PC-9 (cell line): ENCODE measurements at regions of chr7 and their contacts with region 1.

Region 1: DNA sequence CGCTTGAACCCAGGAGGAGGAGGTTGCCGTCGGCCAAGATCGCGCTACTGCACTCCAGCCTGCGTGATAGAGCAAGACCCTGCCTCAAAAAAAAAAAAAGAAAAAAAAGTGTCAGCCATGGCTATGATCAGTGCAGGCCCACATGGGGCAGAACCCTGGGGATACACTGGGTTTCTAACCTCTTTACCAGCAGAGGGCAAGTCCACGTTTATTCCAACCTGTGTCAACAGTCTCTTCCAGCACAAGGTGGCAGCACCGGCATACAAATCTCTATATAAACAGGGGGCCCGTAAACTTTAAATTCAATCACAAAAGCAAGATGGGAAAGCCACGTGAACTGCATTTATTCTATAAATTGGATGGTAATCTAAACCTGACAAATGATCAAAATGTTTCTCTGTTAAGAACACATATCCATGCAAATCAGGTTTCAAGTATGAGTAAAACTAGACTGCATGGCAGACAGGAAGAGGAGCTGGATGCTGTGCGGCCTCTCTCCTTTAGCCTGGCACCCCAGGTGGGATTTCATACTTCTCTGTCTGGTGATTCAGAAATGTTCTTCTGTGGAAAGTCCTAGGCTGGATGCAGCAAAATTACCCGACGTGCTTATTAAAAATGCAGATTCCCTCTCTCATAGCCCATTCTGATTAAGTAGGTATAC is 60.0 kb upstream of the STEAP1B start:
- DNase-seq: peak; percentile 78 to 79
- H3K4me3 ChIP-seq: no peak overlapping the region
- H3K27ac ChIP-seq: peak overlapping the region; percentile 84
- H3K4me1 ChIP-seq: peaks cover 50% of the 10 kb centered on the region
- H3K27me3 ChIP-seq: no peaks in the 10 kb centered on the region
- CTCF ChIP-seq: peak; percentile 99

Region 2: DNA sequence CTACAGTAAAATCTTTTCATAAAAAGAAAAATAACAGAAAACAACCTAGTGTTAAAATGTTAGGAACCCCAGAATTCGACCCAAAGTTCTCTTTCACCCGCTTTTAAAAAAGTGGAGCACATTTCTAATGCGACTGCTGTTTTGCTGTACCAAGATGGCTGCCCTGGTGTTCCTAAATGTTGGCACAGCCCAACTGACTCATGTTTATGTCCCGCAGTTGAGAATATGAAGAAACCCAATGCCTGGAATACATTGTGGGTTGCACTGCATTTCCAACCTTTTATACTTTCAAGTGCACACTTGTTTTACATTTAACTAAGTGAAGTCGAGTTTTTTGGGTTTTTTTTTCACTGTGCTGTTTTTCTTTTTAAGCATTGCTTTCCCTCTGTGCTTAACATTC is 60.9 kb before region 1 on chr7:
- CTCF ChIA-PET with region 1: no interaction called
- POLR2A ChIA-PET with region 1: no interaction called
- intact Hi-C with region 1: no loop called
- DNase-seq: no peak
- H3K4me3 ChIP-seq: no peak overlapping the region
- H3K27ac ChIP-seq: no peak overlapping the region
- H3K4me1 ChIP-seq: peaks cover 23% of the 10 kb centered on the region
- H3K27me3 ChIP-seq: no peaks in the 10 kb centered on the region
- CTCF ChIP-seq: no peak

Region 3: GRCh38 chr7:22549667-22550513 is 10.1 kb before region 1 on chr7:
- CTCF ChIA-PET with region 1: no interaction called
- POLR2A ChIA-PET with region 1: interaction called, 13 read pairs
- intact Hi-C with region 1: no loop called
- DNase-seq: peak in 1 of 2 experiments; percentile 79
- H3K4me3 ChIP-seq: no peak overlapping the region
- H3K27ac ChIP-seq: no peak overlapping the region
- H3K4me1 ChIP-seq: no peaks in the 10 kb centered on the region
- H3K27me3 ChIP-seq: no peaks in the 10 kb centered on the region
- CTCF ChIP-seq: peak; percentile 65

Region 4: DNA sequence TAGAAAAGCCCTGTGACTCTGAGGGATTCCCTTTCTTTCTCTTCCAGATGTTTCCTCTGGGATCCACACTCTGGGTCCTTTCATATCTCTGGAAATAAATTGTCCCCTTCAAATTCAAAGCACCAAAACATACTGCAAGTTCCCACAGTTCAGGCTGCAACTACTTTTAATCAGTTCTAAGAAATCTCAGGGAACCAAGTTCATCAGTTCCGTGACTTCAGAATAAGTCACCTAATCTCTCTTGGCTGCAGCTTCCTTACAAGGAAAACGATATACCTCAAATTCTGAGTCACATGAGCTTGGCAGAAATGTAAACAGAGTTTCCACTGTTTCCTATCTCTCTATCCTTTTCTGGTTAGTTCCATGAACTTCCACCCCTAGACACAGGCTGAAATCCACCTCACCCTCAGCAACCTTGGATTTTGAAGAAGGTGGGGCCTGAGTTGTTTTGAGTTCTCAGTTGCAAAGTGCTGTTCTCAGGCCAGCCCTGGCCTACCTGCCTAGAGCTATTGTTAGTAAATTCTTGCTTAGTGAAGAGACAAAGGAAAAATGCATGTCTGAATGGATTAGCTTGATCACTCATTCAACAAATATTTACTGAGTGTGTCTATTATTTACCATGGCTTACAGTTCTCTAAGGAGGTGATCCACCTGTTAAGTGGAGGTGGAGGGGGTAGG is 107.7 kb after region 1 on chr7:
- CTCF ChIA-PET with region 1: interaction called, 5 read pairs
- POLR2A ChIA-PET with region 1: interaction called, 7 read pairs
- intact Hi-C with region 1: loop called (anchors 1 kb)
- DNase-seq: peak; percentile 87 to 100
- H3K4me3 ChIP-seq: no peak overlapping the region; the same call in 1 of the 2 replicates
- H3K27ac ChIP-seq: peak overlapping the region; percentile 94
- H3K4me1 ChIP-seq: peaks cover 71% of the 10 kb centered on the region
- H3K27me3 ChIP-seq: no peaks in the 10 kb centered on the region
- CTCF ChIP-seq: no peak

Region 5: GRCh38 chr7:22732556-22733126 is 172.7 kb after region 1 on chr7:
- CTCF ChIA-PET with region 1: interaction called, 113 read pairs
- POLR2A ChIA-PET with region 1: interaction called, 24 read pairs
- intact Hi-C with region 1: loop called (anchors 1 kb)
- DNase-seq: peak; percentile 33 to 70
- H3K4me3 ChIP-seq: no peak overlapping the region
- H3K27ac ChIP-seq: no peak overlapping the region
- H3K4me1 ChIP-seq: peaks cover 35% of the 10 kb centered on the region
- H3K27me3 ChIP-seq: no peaks in the 10 kb centered on the region
- CTCF ChIP-seq: peak; percentile 86

Region 6: DNA sequence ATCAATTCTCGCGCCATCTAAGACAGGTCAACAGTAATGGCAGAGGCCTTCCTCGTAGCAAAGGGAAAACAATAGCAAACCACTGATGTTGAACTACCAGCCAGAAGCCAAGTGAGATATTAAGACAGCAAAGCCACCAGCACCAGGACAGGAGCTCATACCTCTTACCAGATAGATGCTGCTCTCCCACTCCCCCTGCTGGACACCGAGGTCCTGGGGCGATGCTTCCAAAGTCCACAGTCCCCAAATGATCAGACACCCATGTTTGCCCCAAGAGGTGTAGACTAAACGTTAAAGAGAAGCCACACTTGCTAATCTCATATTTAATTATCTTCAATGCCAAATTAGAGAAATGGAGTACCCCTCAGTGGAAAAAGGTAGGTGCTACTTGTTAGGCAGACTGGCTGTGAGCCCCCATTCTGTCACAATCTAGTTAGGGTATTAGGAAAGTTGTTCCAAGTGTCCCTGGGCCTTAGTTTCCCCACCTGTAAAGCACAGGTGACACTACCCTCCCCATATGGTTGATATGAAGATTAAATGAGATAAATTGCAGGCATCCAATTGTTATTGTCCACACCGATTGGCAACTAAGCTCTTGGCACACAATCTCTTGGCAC is 222.8 kb after region 1 on chr7:
- CTCF ChIA-PET with region 1: interaction called, 16 read pairs
- POLR2A ChIA-PET with region 1: interaction called, 11 read pairs
- intact Hi-C with region 1: loop called (anchors 1 kb)
- DNase-seq: peak; percentile 54 to 70
- H3K4me3 ChIP-seq: no peak overlapping the region
- H3K27ac ChIP-seq: no peak overlapping the region
- H3K4me1 ChIP-seq: no peaks in the 10 kb centered on the region; the same call in 1 of the 2 replicates
- H3K27me3 ChIP-seq: no peaks in the 10 kb centered on the region
- CTCF ChIP-seq: peak; percentile 95

Region 7: DNA sequence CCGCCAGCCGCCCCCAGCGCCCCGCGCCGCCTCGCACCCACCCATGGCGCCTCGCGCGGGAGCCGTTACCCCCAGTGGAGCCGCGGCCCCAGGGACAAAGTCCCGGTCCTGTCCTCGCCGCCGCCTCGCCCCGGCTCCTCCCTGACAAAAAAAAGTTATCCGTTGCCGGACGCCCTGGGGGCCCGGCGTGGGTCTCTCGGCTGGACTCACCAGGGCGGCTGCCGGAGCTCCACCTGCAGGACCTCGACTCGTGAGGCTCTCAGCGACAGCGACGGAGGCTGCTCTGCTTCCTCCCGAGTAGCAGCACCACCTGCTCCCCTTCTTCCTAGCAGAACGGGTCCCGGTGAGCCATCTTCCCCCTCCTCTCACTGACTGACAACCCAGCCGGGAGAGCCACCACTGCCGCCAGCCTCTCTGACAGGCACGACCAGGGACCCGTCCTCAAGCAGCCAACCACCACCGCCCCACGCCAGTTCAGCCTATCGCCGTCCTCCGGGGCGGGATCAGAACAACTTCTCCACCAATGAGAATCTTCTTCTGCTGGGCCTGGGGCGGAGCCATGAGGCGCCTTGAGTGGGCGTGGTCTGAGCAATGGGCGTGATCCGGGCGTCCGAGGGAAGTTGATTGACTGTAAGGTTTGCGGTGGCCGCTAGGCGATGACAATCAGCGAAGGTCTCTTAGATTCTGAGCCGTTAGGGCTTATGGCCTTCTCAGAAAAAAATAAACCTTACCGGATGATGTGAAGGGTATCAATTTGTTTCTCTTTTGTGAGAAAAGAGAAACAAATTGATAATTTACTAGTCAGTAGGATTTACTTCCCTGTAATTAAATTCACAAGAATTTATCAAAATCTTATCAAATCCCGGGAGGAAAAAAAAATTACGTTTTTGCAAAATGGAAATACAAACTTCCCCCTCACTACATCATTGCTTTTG is 454.0 kb after region 1 on chr7 and contains the start of gene HYCC1:
- CTCF ChIA-PET with region 1: interaction called, 4 read pairs
- POLR2A ChIA-PET with region 1: no interaction called
- intact Hi-C with region 1: loop called (anchors 5 kb)
- DNase-seq: peak; percentile 98 to 100
- H3K4me3 ChIP-seq: peak within 1 kb of the TSS; percentile 58
- H3K27ac ChIP-seq: no peak within 1 kb of the TSS
- H3K4me1 ChIP-seq: peaks cover 11% of the 10 kb centered on the region
- H3K27me3 ChIP-seq: no peaks in the 10 kb centered on the region
- CTCF ChIP-seq: peak; percentile 68
- total RNA-seq, gene HYCC1: 25.1 and 28.2 TPM in 2 replicates

Region 8: GRCh38 chr7:23546897-23547572 is 987.1 kb after region 1 on chr7:
- CTCF ChIA-PET with region 1: no interaction called
- POLR2A ChIA-PET with region 1: no interaction called
- intact Hi-C with region 1: loop called (anchors 10 kb)
- DNase-seq: peak; percentile 85 to 89
- H3K4me3 ChIP-seq: no peak overlapping the region
- H3K27ac ChIP-seq: no peak overlapping the region
- H3K4me1 ChIP-seq: no peaks in the 10 kb centered on the region
- H3K27me3 ChIP-seq: no peaks in the 10 kb centered on the region
- CTCF ChIP-seq: peak; percentile 98